ENCODE measurements at regions of chr10 and their contacts with region 1.

Region 1: GRCh38 chr10:61125560-61126170 is 181.7 kb upstream of the RHOBTB1 start:
- DNase-seq: no peak
- ATAC-seq: no peak
- H3K4me3 ChIP-seq: no peak overlapping the region
- H3K27ac ChIP-seq: no peak overlapping the region
- H3K4me1 ChIP-seq: no peaks in the 10 kb centered on the region
- H3K27me3 ChIP-seq: no peaks in the 10 kb centered on the region
- CTCF ChIP-seq: no peak

Region 2: GRCh38 chr10:61175316-61175715 is 49.7 kb after region 1 on chr10:
- CTCF ChIA-PET with region 1: no interaction called
- POLR2A ChIA-PET with region 1: interaction called, 25 read pairs
- intact Hi-C with region 1: no loop called
- DNase-seq: no peak
- ATAC-seq: no peak
- H3K4me3 ChIP-seq: no peak overlapping the region
- H3K27ac ChIP-seq: no peak overlapping the region
- H3K4me1 ChIP-seq: no peaks in the 10 kb centered on the region
- H3K27me3 ChIP-seq: peaks cover 31% of the 10 kb centered on the region
- CTCF ChIP-seq: no peak

Region 3: GRCh38 chr10:61223576-61223975 is 97.9 kb after region 1 on chr10:
- CTCF ChIA-PET with region 1: no interaction called
- POLR2A ChIA-PET with region 1: no interaction called
- intact Hi-C with region 1: no loop called
- DNase-seq: no peak
- ATAC-seq: no peak
- H3K4me3 ChIP-seq: no peak overlapping the region
- H3K27ac ChIP-seq: no peak overlapping the region
- H3K4me1 ChIP-seq: no peaks in the 10 kb centered on the region
- H3K27me3 ChIP-seq: peaks cover 4% of the 10 kb centered on the region; the same call in 1 of the 2 replicates
- CTCF ChIP-seq: no peak